ENCODE measurements at regions of chr14 and their contacts with region 1.

Region 1: GRCh38 chr14:80987235-80988032 is 32.0 kb downstream of the TSHR start:
- DNase-seq: peak; percentile 76
- ATAC-seq: peak; percentile 59
- H3K4me3 Mint-ChIP-seq: no peak overlapping the region
- H3K27ac Mint-ChIP-seq: no peak overlapping the region
- H3K4me1 Mint-ChIP-seq: peaks cover 12% of the 10 kb centered on the region
- H3K27me3 Mint-ChIP-seq: peaks cover 15% of the 10 kb centered on the region

Region 2: DNA sequence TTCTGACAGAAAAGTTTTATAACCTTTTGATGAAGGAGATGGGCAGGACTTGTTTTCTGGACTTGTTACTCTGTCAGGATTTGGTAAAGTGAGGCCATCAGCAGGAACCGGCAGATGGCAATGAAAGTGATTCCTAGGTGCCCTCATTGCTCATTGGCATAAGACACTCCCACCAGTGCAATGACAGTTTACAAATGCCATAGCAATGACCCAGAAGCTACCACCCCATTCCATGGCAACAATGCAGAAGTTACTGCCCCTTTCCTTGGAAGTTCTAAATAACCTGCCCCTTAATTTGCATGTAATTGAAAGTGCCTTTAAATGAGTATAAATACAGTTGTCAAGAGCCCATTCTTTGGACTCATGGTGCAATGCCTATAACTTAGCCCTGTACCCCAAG is 268.5 kb before region 1 on chr14:
- CTCF ChIA-PET with region 1: no interaction called
- DNase-seq: no peak
- ATAC-seq: no peak
- H3K4me3 Mint-ChIP-seq: no peak overlapping the region
- H3K27ac Mint-ChIP-seq: no peak overlapping the region
- H3K4me1 Mint-ChIP-seq: peaks cover 8% of the 10 kb centered on the region
- H3K27me3 Mint-ChIP-seq: no peaks in the 10 kb centered on the region

Region 3: DNA sequence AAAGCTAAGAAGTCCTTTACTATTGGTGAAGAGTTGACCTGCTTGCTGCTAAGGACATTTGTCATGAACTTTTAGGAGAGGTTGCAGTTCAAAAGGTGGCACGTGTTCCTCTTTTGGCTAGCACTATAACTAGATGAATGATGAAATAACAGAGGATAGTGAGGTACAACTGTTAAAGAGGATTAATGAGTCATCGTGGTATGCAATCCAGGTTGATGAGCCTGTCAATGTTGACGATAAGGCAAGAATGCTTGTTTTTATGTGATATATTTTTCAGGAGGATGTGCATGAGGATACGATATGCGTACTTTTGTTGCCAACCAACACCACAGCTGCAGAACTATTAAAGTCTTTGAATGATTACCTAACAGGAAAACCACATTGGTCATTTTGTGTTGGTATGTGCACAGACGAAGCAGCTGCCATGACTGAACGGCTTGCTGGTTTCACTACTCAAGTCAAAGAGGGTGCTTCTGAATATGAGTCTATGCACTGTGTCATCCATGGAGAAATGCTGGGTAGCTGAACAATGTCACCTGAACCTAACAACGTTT is 56.5 kb before region 1 on chr14:
- CTCF ChIA-PET with region 1: interaction called, 16 read pairs
- DNase-seq: peak; percentile 87
- ATAC-seq: peak; percentile 92
- H3K4me3 Mint-ChIP-seq: peak overlapping the region; percentile 52
- H3K27ac Mint-ChIP-seq: peak overlapping the region; percentile 87
- H3K4me1 Mint-ChIP-seq: peaks cover 67% of the 10 kb centered on the region
- H3K27me3 Mint-ChIP-seq: no peaks in the 10 kb centered on the region

Region 4: DNA sequence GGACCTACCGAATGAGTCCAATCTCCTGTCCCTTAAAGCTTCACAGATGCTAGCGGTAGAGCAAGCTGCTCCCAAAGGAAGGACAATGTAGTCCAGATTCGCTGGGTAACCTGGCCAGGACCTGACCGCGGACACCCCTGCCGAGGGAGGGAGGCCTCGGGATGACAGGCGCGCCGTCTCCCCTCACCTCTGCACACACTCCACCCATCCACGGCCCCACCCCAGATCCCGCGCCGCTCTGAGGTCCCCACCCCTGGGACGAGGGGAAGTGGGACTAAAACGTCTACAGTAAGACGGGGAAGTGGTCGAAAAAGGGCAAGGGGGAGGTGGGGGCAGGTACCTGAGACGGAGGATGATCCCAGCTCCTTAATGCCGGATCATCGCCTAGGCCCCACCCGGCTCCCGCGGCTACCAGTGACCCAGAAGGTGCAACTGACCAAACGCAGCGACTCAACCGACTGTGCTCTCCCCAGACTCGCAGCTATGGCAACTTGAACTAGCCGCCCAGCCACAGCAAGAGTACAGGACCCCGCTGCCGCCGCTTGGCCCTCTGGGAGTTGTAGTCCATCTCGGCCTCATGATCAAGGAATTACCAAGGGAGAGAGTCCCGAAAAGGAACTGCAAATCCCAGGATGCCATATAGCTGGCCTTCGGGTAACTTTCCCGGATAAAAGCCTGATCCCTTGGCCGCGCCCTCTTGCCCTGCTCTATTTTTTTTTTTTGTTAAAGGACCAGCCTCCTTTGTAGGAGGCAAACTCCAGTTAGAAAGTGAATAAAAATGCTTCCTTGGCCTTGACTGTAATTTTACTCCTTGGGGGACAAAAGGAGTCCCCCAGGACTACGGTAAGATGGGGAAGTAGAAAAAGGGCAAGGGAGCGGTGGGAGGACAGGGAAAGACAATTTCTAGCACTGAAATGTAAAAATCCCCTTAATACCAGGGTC is 45.9 kb before region 1 on chr14 and contains the start of gene CEP128:
- CTCF ChIA-PET with region 1: interaction called, 22 read pairs
- DNase-seq: peak; percentile 95
- ATAC-seq: peak; percentile 97
- H3K4me3 Mint-ChIP-seq: peak within 1 kb of the TSS; percentile 91
- H3K27ac Mint-ChIP-seq: peak within 1 kb of the TSS; percentile 86
- H3K4me1 Mint-ChIP-seq: peaks cover 34% of the 10 kb centered on the region
- H3K27me3 Mint-ChIP-seq: no peaks in the 10 kb centered on the region
- total RNA-seq, gene CEP128: 28.9 to 47.4 TPM

Region 5: GRCh38 chr14:80954687-80955299 is 32.6 kb before region 1 on chr14:
- CTCF ChIA-PET with region 1: interaction called, 149 read pairs
- DNase-seq: peak; percentile 82
- ATAC-seq: peak; percentile 50
- H3K4me3 Mint-ChIP-seq: peak overlapping the region; percentile 72
- H3K27ac Mint-ChIP-seq: peak overlapping the region; percentile 70
- H3K4me1 Mint-ChIP-seq: peaks cover 43% of the 10 kb centered on the region
- H3K27me3 Mint-ChIP-seq: peaks cover 33% of the 10 kb centered on the region

Region 6: DNA sequence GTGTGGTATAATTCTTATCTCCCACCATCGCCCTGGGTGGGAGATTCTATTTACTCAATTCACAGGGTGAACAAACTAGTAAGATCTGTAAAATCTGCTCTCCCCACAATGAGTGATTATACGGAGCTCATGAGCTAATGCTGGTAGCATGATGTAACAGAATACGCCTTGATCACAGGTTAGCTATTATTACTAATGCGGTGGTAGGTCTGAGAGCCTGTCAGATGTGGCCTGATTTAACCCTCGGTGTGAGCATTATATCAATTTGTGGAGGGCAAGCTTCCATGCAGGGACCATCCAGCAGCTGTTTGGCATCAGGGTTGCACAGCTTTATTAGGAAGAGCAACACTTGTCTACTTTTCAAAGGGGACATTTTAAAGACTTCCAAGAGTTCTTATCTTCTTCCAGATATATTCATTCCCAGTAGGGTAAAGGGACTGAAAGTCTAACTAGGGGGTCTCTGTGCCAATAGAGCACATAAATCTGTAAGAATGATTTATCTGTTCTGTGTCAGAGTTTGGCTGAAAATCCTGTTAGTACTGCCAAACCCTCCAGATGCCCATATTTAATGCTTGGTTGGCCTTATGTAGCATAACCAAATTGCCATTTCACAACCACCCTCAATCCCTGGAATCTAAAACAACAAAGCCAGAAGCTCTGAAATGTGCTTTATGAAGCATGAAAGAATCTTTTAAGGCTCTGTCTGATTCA is 13.3 kb before region 1 on chr14:
- CTCF ChIA-PET with region 1: interaction called, 89 read pairs
- DNase-seq: no peak
- ATAC-seq: peak; percentile 11
- H3K4me3 Mint-ChIP-seq: no peak overlapping the region
- H3K27ac Mint-ChIP-seq: no peak overlapping the region
- H3K4me1 Mint-ChIP-seq: peaks cover 33% of the 10 kb centered on the region
- H3K27me3 Mint-ChIP-seq: peaks cover 18% of the 10 kb centered on the region

Region 7: DNA sequence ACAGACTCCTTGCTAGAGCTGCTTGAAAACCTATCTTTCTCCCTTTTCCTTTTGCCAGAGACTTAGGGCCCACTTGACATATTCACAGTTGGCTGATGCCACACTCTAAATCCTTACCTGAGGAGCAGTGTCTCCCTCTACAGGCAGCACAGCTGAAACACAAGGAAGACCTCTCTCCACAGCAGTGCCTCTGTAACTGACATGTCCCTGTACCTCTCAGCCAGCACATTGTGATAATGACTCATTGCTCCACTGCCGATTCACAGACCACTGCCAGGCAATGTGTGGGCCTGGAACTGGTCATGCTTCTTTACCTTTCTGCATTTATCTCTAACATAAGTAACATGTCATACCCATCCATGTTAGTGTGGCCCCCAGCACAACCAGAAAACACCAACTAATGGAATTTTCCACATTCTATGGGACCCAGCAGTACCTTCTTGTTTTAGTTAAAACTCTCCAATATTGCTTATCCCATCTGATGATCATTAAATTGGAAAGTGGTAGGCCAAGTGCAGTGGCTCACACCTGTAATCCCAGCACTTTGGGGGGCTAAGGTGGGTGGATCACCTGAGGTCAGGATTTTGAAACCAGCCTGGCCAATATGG is 176.8 kb after region 1 on chr14:
- CTCF ChIA-PET with region 1: interaction called, 14 read pairs
- DNase-seq: peak; percentile 79
- ATAC-seq: peak; percentile 96
- H3K4me3 Mint-ChIP-seq: no peak overlapping the region
- H3K27ac Mint-ChIP-seq: no peak overlapping the region
- H3K4me1 Mint-ChIP-seq: peaks cover 18% of the 10 kb centered on the region
- H3K27me3 Mint-ChIP-seq: no peaks in the 10 kb centered on the region

Region 8: DNA sequence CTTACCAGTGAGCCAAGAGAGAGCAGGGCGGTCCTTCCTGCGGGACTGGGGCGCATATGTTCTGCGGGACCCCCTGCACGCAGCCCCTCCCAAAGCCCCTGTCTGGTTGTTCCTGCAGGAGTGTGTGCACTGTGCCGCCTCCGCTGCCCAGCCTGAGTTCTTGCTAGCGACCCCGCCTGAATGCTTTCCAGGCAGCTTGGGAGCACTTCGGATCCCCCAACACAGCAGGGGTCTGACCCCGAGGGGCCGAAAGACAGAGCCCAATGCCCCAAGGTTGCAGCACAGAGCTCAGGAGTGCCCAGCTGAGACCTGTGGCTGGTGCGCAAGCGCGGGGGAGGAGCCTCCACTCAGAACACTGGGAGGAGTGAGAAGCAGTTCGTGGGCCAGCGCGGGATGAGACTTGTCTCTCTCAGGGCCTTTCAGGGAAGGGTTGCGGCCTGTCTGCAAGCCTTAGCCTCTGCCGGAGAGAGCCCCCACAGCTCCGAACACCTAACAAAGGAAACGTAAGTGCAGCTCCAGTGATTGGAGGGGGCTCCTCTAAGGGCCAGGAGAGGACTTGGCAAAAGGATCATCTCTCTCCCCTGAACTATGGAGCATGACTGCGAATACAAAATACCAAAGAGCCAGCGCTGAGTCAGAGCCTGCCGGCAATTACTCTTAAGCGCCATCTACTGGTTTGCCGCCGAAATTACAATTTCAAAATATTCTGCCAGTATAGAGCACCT is 182.8 kb after region 1 on chr14:
- CTCF ChIA-PET with region 1: interaction called, 15 read pairs
- DNase-seq: peak; percentile 93
- ATAC-seq: peak; percentile 99
- H3K4me3 Mint-ChIP-seq: peak overlapping the region; percentile 90
- H3K27ac Mint-ChIP-seq: peak overlapping the region; percentile 95
- H3K4me1 Mint-ChIP-seq: peaks cover 36% of the 10 kb centered on the region
- H3K27me3 Mint-ChIP-seq: no peaks in the 10 kb centered on the region

Measured in activated CD8-positive, alpha-beta memory T cell treated with anti-CD3 and anti-CD28 coated beads, Interleukin-2, amount 10 ng/mL, durations not matched to agents 7 days and 5 days (primary cell).